CD4-positive, alpha-beta memory T cell (primary cell): ENCODE measurements at regions of chr11 and their contacts with region 1.

Region 1: GRCh38 chr11:67373925-67374618 is 674 bp upstream of the CLCF1 start:
- DNase-seq: peak in 3 of 5 donors; percentile 49 to 73 (median 51)
- H3K4me3 ChIP-seq: peak overlapping the region; percentile 34 to 63
- H3K4me3 Mint-ChIP-seq: peak overlapping the region; percentile 73 to 95 (median 86)
- H3K27ac ChIP-seq: peak overlapping the region; percentile 38
- H3K27ac Mint-ChIP-seq: peak overlapping the region; percentile 57 to 97 (median 87)
- H3K4me1 ChIP-seq: peaks cover 53% of the 10 kb centered on the region
- H3K4me1 Mint-ChIP-seq: peaks cover 36 to 67% (median 42%) of the 10 kb centered on the region in 4 donors
- H3K27me3 ChIP-seq: no peaks in the 10 kb centered on the region
- H3K27me3 Mint-ChIP-seq: peaks cover 4% of the 10 kb centered on the region in 2 donors

Region 2: GRCh38 chr11:67391304-67392132 is 17.4 kb after region 1 on chr11 and contains the start of gene RAD9A:
- CTCF ChIA-PET with region 1: interaction called, 16 read pairs
- POLR2A ChIA-PET with region 1: interaction called, 17 read pairs
- intact Hi-C with region 1: no loop called
- DNase-seq: peak; percentile 86 to 93 (median 89)
- H3K4me3 ChIP-seq: peak within 1 kb of the TSS; percentile 63 to 75
- H3K4me3 Mint-ChIP-seq: peak within 1 kb of the TSS; percentile 87 to 93 (median 91)
- H3K27ac ChIP-seq: peak within 1 kb of the TSS; percentile 79
- H3K27ac Mint-ChIP-seq: peak within 1 kb of the TSS; percentile 82 to 94 (median 87)
- H3K4me1 ChIP-seq: peaks cover 17% of the 10 kb centered on the region
- H3K4me1 Mint-ChIP-seq: peaks cover 23 to 46% (median 36%) of the 10 kb centered on the region in 4 donors
- H3K27me3 ChIP-seq: no peaks in the 10 kb centered on the region
- H3K27me3 Mint-ChIP-seq: no peaks in the 10 kb centered on the region
- total RNA-seq, gene RAD9A: 51.8 to 55.9 TPM